ENCODE measurements at regions of chr6 and their contacts with region 1.

Region 1: DNA sequence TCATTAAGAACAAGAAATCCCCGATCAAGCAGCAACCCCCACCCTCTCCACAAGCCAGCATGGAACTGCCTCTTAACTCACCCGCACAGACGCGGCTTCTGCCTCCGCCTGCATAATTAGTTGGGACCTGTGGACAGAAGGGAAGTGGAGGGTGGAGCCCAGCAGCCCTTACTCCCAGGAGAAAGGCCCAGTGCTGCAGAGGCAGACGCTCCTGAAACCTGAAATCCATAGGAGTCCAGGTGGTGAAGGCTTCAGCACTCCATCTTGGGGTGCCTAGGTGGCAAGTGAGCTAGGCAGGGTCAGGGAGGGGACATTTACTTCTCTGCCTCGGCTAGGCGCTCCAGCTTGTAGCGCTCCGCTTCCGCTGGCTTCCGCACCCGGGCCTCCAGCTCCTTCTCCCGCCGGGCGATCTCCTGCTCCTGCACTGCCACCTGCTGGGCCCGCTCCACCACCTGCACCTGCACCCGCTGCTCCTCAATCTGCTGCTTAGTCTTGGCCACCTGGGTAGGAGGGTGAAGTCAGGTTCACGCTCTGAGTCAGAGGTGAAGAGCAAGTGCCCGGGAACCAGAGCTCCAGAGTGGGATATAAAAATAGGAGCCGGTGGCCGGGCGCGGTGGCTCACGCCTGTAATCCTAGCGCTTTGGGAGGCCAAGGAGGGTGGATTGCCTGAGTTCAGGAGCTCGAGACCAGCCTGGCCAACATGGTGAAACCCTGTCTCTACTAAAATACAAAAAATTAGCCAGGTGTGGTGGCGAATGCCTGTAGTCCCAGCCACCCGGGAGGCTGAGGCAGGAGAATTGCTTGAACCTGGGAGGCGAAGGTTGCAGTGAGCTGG is 10.7 kb downstream of the TUBB start:
- H3K4me3 ChIP-seq: no peak overlapping the region
- H3K27ac ChIP-seq: no peak overlapping the region
- H3K4me1 ChIP-seq: peaks cover 4% of the 10 kb centered on the region
- CTCF ChIP-seq: peak; percentile 91

Region 2: GRCh38 chr6:30590994-30591393 is 139.8 kb before region 1 on chr6:
- CTCF ChIA-PET with region 1: interaction called, 20 read pairs
- POLR2A ChIA-PET with region 1: no interaction called
- H3K4me3 ChIP-seq: no peak overlapping the region
- H3K27ac ChIP-seq: no peak overlapping the region
- H3K4me1 ChIP-seq: no peaks in the 10 kb centered on the region
- CTCF ChIP-seq: no peak

Region 3: GRCh38 chr6:30646458-30647241 is 84.2 kb before region 1 on chr6 and contains the start of gene C6orf136:
- CTCF ChIA-PET with region 1: interaction called, 14 read pairs
- POLR2A ChIA-PET with region 1: interaction called, 3 read pairs
- H3K4me3 ChIP-seq: peak within 1 kb of the TSS; percentile 88
- H3K27ac ChIP-seq: peak within 1 kb of the TSS; percentile 96
- H3K4me1 ChIP-seq: peaks cover 8% of the 10 kb centered on the region
- CTCF ChIP-seq: no peak

Region 4: DNA sequence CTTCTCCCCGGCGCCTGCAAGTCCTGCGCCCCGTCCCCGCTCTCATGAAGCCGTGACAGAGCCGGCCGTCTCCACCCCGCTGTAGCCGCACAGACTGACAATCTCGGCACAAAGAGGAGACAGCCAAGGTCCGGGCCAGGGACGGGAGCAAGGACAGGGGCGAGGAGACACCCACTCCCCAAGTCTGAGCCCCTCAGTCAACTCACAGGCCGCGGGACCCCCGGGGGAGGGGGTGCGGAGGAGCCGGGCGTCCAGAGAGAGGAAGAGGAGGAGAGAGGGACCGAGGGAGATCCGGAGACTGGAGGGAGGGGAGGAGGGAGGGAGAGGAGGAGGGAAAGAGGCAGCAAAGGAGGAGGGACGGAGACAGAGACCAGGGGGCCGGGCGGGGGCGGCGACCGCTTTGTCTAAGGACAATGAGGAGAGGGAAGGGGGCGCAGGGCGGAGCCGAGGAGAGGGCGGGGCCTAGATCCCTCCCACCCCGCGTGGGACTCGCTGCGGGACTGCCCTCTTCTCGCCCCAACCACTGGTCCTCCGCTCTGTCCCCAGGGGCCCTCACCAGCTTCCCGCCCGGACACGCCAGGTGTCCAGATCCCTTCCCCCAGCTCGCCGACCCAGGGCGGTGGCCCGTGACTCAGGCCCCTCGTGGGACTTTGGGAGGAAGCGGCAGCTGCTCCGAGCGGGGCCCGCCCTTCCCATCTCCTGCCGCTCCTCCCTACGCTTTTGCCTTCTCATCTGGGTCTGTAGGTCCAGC is 43.7 kb before region 1 on chr6:
- CTCF ChIA-PET with region 1: interaction called, 692 read pairs
- POLR2A ChIA-PET with region 1: interaction called, 17 read pairs
- H3K4me3 ChIP-seq: peak overlapping the region; percentile 52
- H3K27ac ChIP-seq: peak overlapping the region; percentile 94
- H3K4me1 ChIP-seq: peaks cover 31% of the 10 kb centered on the region
- CTCF ChIP-seq: peak; percentile 4; the same call in 1 of the 2 replicates

Region 5: DNA sequence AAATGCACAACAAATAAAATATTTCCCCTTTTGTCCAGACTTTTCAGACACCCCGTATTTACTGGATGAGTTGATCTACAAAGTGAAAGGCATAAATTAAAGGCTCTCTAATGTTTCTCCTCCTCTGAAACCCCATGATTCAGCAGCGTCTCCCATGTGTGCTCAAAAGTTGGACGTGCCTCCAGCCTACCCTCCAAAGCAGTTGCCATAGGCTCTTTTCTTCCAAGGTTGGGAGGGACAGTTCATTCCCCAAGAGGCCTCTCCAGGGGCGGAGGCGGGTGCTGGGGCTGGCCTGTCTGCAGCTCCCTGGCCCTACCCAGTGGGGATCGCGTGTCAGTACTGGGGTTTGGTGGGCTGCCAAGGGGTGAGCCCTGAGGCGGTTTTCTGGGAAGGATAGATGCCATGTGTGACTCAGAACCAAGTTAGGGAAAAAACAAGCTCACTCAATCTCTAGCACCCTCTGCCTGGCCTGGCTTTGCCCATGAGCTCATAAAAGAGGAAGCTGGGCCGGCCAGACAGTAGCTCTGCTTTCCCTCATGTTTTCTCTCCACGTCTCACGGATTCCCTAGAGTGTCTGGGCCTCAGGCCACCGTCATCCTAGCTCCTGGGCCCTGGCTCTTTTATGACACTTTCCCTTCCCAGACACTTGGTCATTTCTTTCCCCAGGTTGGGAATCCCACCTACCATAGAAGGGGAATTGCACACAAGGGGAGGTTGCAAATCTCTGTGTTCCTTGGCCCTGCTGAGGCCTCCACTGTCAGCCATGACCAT is 21.5 kb after region 1 on chr6:
- CTCF ChIA-PET with region 1: interaction called, 15 read pairs
- POLR2A ChIA-PET with region 1: interaction called, 8 read pairs
- H3K4me3 ChIP-seq: no peak overlapping the region
- H3K27ac ChIP-seq: peak overlapping the region; percentile 98
- H3K4me1 ChIP-seq: peaks cover 19% of the 10 kb centered on the region
- CTCF ChIP-seq: peak; percentile 37

Region 6: DNA sequence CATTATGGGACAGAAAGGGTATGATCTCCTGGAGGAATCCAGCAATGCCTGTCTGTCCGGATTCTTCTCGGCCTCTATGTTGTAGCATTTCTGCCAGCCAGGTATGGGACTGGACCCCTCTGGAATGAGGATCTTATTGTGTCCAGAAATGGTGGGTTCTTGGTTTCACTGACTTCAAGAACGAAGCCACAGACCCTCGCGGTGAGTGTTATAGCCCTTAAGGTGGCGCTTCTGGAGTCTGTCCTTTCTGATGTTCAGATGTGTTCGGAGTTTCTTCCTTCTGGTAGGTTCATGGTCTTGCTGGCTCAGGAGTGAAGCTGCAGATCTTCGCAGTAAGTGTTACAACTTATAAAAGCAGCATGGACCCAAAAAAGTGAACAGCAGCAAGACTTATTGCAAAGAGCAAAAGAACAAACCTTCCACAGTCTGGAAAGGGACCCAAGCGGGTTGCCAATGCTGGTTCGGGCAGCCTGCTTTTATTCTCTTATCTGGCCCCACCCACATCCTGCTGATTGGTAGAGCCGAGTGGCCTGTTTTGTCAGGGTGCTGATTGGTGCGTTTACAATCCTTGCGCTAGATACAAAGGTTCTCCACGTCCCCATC is 75.9 kb after region 1 on chr6:
- CTCF ChIA-PET with region 1: no interaction called
- POLR2A ChIA-PET with region 1: no interaction called
- H3K4me3 ChIP-seq: no peak overlapping the region
- H3K27ac ChIP-seq: no peak overlapping the region
- H3K4me1 ChIP-seq: no peaks in the 10 kb centered on the region
- CTCF ChIP-seq: no peak

Region 7: GRCh38 chr6:30821862-30822782 is 91.3 kb after region 1 on chr6:
- CTCF ChIA-PET with region 1: interaction called, 40 read pairs
- POLR2A ChIA-PET with region 1: no interaction called
- H3K4me3 ChIP-seq: no peak overlapping the region
- H3K27ac ChIP-seq: no peak overlapping the region
- H3K4me1 ChIP-seq: peaks cover 9% of the 10 kb centered on the region; the same call in 1 of the 2 replicates
- CTCF ChIP-seq: peak; percentile 53; the same call in 1 of the 2 replicates

Region 8: GRCh38 chr6:30883685-30884520 is 153.1 kb after region 1 on chr6 and contains the start of gene DDR1:
- CTCF ChIA-PET with region 1: interaction called, 21 read pairs
- POLR2A ChIA-PET with region 1: interaction called, 17 read pairs
- H3K4me3 ChIP-seq: peak within 1 kb of the TSS; percentile 47
- H3K27ac ChIP-seq: peak within 1 kb of the TSS; percentile 69
- H3K4me1 ChIP-seq: peaks cover 35% of the 10 kb centered on the region
- CTCF ChIP-seq: no peak